Common myeloid progenitor, CD34-positive (primary cell): ENCODE measurements at regions of chrX and their contacts with region 1.

Region 1: GRCh38 chrX:103711533-103712369 is 1.0 kb downstream of the TMEM31 start:
- DNase-seq: peak; percentile 54 to 82 (median 75)
- H3K4me3 ChIP-seq: no peak overlapping the region
- H3K27ac ChIP-seq: no peak overlapping the region
- H3K4me1 ChIP-seq: no peaks in the 10 kb centered on the region
- H3K27me3 ChIP-seq: no peaks in the 10 kb centered on the region

Region 2: DNA sequence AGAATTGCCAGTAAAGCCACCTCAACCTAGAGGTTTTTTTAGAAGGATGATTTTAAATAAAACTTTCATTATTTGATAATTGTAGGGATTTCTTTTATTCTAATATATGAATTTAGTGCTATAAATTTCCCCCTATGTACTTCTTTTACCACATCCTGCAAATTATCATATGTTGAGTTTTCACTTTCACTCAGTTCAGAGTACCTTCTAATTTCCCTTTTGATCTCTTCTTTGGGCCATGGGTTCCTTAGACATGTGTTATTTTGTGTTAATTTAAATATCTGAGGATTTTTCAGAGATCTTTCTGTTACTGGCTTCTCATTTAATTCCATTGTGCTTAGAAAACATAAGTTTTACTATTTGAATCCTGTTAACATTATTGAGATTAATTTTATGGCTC is 407.0 kb before region 1 on chrX:
- CTCF ChIA-PET with region 1: no interaction called
- POLR2A ChIA-PET with region 1: no interaction called
- DNase-seq: no peak
- H3K4me3 ChIP-seq: no peak overlapping the region
- H3K27ac ChIP-seq: no peak overlapping the region
- H3K4me1 ChIP-seq: no peaks in the 10 kb centered on the region
- H3K27me3 ChIP-seq: peaks cover 0 to 4% (median 0%) of the 10 kb centered on the region in 5 experiments

Region 3: DNA sequence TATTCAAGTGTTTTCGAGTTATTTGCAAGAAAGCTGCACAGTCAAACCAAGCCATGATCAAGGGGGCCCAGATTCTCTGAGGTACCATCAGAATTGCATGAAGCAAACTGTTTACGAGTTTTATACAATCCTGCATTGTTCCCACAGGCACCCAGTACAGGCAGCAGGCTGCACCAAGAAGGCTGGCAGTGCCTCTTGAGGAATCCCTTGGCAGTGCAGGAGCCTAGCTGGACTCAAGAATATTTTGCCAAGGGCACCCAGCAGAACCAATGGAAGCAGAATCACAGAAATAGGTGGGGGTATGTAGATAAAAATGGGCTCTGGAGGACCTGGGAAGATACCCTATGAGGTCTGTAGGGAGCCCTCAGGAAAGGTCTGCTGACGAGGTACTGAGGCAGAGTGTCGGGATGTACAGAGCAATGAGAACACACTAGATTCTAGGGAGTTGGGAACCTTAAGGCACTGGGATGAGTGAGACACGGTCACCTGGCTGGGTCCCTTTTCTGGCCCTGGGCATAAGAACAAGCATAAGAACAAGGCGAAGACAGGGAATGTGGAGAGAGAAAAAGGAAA is 62.4 kb after region 1 on chrX:
- CTCF ChIA-PET with region 1: interaction called, 58 read pairs
- POLR2A ChIA-PET with region 1: no interaction called
- DNase-seq: peak; percentile 36 to 62 (median 49)
- H3K4me3 ChIP-seq: no peak overlapping the region
- H3K27ac ChIP-seq: no peak overlapping the region
- H3K4me1 ChIP-seq: no peaks in the 10 kb centered on the region
- H3K27me3 ChIP-seq: peaks cover 0 to 4% (median 0%) of the 10 kb centered on the region in 5 experiments